ENCODE measurements at regions of chr2 and their contacts with region 1.

Region 1: DNA sequence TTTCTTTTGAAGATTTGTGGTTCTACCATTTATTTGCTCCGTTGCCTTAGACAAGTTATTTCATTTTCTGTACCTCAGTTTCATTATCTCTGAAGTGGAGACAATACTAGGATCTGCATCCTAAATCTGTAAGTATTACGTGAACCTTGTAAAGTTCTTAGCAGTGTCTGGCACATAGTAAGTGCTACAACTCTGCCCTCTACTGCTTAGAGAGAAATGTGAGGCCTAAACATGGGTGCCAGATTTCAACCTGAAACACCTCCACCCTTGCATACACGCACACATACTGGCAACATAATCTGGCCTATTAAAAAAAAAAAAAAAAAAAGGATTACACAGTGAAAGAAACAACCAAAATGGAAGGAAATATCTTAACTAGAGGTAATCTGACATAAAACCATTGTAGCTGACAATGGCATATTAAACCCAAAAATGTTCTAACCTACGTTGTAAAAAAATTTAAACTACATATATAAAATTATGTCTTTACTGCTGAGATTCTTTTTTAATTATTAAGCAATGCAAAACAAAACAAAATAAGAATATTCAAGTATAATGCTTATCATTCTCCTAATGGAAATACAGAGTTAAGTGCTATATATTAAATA is 132.6 kb downstream of the MAP2 start:
- DNase-seq: peak; percentile 62
- H3K4me3 Mint-ChIP-seq: no peak overlapping the region
- H3K27ac Mint-ChIP-seq: no peak overlapping the region
- H3K4me1 Mint-ChIP-seq: no peaks in the 10 kb centered on the region
- H3K27me3 Mint-ChIP-seq: no peaks in the 10 kb centered on the region
- CTCF ChIP-seq: peak; percentile 61

Region 2: DNA sequence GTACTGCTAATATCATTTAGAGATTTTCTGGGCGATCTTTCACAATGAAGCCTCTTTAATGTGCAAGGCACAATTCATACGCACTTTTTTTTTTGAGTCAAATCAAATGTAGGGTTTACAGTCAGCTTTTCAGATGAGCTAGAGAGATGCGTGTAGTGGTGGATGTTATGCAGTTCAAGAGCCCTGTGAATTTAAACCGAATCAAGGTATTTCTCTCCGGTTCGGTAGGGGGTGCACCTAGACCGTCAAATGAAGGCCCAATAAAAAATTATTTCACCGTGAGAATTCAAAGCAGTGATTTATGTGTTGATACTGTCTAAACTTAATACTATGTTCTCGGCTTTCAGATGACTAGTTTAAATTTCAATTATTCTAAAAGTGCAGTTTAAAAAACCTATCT is 1148.8 kb before region 1 on chr2:
- CTCF ChIA-PET with region 1: interaction called, 3 read pairs
- POLR2A ChIA-PET with region 1: no interaction called
- intact Hi-C with region 1: loop called (anchors 10 kb)
- DNase-seq: no peak
- H3K4me3 Mint-ChIP-seq: no peak overlapping the region
- H3K27ac Mint-ChIP-seq: no peak overlapping the region
- H3K4me1 Mint-ChIP-seq: no peaks in the 10 kb centered on the region
- H3K27me3 Mint-ChIP-seq: peaks cover 55% of the 10 kb centered on the region
- CTCF ChIP-seq: peak; percentile 27

Region 3: DNA sequence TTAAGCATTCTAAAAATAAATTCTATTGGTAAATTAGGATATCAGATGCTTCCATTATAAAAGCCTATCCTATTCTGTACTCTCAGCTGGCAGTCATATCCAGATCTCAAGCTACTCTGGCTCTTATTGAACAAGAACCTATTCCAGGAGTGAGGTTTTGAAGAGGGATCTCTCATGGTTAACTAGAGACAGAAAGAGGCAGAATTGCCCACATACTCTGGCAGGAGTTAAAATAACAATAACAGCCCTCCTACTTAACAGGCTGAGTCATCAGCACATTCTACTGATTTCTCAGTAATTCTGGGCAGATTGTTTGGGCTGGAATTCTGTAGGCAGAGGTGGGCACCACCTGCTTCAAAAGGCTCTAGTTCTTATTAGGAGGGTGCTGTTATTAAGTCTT is 73.1 kb after region 1 on chr2:
- CTCF ChIA-PET with region 1: no interaction called
- POLR2A ChIA-PET with region 1: no interaction called
- intact Hi-C with region 1: no loop called
- DNase-seq: peak; percentile 66
- H3K4me3 Mint-ChIP-seq: no peak overlapping the region
- H3K27ac Mint-ChIP-seq: peak overlapping the region; percentile 36
- H3K4me1 Mint-ChIP-seq: peaks cover 14% of the 10 kb centered on the region
- H3K27me3 Mint-ChIP-seq: no peaks in the 10 kb centered on the region
- CTCF ChIP-seq: no peak

Region 4: DNA sequence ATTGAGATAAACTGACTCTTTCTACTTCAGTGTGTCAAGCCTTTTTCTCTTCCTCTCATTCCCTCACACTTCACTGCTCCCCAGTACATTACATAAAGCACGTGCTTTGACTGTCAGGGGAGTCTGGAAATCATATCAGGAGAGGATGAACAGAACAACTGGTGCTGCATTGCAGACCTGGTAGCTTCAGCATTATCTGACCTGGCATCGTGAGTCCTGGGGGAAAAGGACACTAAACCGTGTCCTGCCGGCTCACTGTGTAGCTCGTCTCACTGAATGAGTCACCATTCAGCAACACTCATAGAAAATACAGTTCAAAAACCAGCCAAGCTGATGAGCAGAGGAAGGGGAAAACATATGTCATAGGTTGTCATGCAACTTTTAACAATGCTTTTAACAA is 106.7 kb after region 1 on chr2:
- CTCF ChIA-PET with region 1: no interaction called
- POLR2A ChIA-PET with region 1: no interaction called
- intact Hi-C with region 1: no loop called
- DNase-seq: peak; percentile 52
- H3K4me3 Mint-ChIP-seq: no peak overlapping the region
- H3K27ac Mint-ChIP-seq: peak overlapping the region; percentile 35
- H3K4me1 Mint-ChIP-seq: peaks cover 10% of the 10 kb centered on the region
- H3K27me3 Mint-ChIP-seq: no peaks in the 10 kb centered on the region
- CTCF ChIP-seq: no peak

Region 5: GRCh38 chr2:209734805-209735204 is 178.3 kb after region 1 on chr2:
- CTCF ChIA-PET with region 1: no interaction called
- POLR2A ChIA-PET with region 1: no interaction called
- intact Hi-C with region 1: no loop called
- DNase-seq: no peak
- H3K4me3 Mint-ChIP-seq: no peak overlapping the region
- H3K27ac Mint-ChIP-seq: no peak overlapping the region
- H3K4me1 Mint-ChIP-seq: no peaks in the 10 kb centered on the region
- H3K27me3 Mint-ChIP-seq: no peaks in the 10 kb centered on the region
- CTCF ChIP-seq: no peak